PC-3 (cell line): ENCODE measurements at regions of chr1 and their contacts with region 1.

Region 1: DNA sequence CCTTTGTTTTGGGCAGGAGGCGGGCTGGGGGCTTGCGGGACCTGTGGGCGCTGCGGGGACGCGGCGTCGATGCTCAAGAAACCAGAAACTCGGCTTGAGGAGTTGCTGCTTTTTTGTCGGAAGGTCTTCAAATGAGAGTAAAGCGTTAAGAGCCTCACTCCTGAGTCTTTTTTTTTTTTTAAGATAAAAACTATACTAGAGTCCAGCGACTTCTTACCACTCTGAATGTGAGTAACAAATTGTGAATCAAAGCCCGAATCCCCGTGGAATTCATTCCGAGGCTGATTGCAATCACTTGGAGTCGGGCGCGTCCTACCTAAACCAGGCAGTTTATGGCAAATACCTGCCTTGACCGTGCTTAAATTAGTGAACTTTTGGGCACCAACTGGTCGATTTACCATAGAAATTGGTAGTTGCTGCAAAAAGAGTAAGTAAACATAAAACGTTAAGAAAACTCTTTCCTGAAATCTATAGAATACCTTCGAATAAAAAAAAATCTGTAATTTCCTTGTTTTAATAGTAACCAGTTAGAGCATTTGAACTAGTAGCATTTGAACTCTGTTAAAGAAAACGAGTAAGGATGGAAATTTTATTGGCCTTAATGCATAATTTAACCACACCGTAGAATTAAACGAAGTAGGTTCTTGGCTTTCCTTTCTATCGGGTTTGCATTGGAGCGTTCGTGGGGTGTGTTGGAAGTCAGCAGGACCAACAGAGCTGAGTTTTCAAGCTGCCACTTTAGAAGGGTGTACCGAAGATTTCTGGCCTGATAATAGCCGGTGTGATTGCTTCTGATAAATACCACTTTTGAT is 769 bp downstream of the GPSM2 start:
- DNase-seq: peak; percentile 39
- ATAC-seq: peak; percentile 23
- H3K4me3 ChIP-seq: peak overlapping the region; percentile 87
- H3K27ac ChIP-seq: 0 out of 2 replicates have a peak overlapping the region, but pooled peaks have one; percentile 12
- H3K4me1 ChIP-seq: peaks cover 20% of the 10 kb centered on the region
- H3K27me3 ChIP-seq: no peaks in the 10 kb centered on the region
- CTCF ChIP-seq: no peak

Region 2: GRCh38 chr1:108801101-108801500 is 76.5 kb before region 1 on chr1:
- CTCF ChIA-PET with region 1: no interaction called
- POLR2A ChIA-PET with region 1: no interaction called
- intact Hi-C with region 1: no loop called
- DNase-seq: no peak
- ATAC-seq: no peak
- H3K4me3 ChIP-seq: no peak overlapping the region
- H3K27ac ChIP-seq: no peak overlapping the region
- H3K4me1 ChIP-seq: no peaks in the 10 kb centered on the region
- H3K27me3 ChIP-seq: no peaks in the 10 kb centered on the region
- CTCF ChIP-seq: no peak

Region 3: DNA sequence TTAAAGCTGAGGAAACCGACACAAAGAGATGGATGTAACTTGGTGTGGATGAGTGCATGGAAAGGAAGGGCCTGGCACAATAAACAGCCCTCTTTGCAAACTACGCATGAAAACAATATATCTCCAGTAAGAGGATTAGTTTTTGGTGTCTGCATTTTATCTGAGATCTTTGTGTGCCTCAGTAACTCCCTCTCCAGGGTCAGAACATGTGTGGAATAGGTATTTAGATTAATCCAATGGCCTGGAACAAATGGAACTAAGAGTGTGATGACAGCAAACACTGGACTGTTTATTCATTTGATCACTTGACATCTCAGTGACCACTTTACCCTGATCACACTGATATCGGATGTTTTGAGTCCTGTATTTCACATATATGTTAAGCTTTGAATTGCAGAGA is 65.9 kb before region 1 on chr1:
- CTCF ChIA-PET with region 1: no interaction called
- POLR2A ChIA-PET with region 1: no interaction called
- intact Hi-C with region 1: no loop called
- DNase-seq: no peak
- ATAC-seq: no peak
- H3K4me3 ChIP-seq: no peak overlapping the region
- H3K27ac ChIP-seq: no peak overlapping the region
- H3K4me1 ChIP-seq: peaks cover 32% of the 10 kb centered on the region
- H3K27me3 ChIP-seq: no peaks in the 10 kb centered on the region
- CTCF ChIP-seq: no peak

Region 4: GRCh38 chr1:108897865-108898720 is 20.5 kb after region 1 on chr1:
- CTCF ChIA-PET with region 1: interaction called, 7 read pairs
- POLR2A ChIA-PET with region 1: no interaction called
- intact Hi-C with region 1: loop called (anchors 2 kb)
- DNase-seq: peak; percentile 80
- ATAC-seq: peak; percentile 60
- H3K4me3 ChIP-seq: no peak overlapping the region
- H3K27ac ChIP-seq: no peak overlapping the region
- H3K4me1 ChIP-seq: peaks cover 14% of the 10 kb centered on the region
- H3K27me3 ChIP-seq: no peaks in the 10 kb centered on the region
- CTCF ChIP-seq: peak; percentile 84

Region 5: GRCh38 chr1:108947871-108948525 is 70.4 kb after region 1 on chr1:
- CTCF ChIA-PET with region 1: no interaction called
- POLR2A ChIA-PET with region 1: no interaction called
- intact Hi-C with region 1: no loop called
- DNase-seq: no peak
- ATAC-seq: no peak
- H3K4me3 ChIP-seq: no peak overlapping the region
- H3K27ac ChIP-seq: no peak overlapping the region
- H3K4me1 ChIP-seq: no peaks in the 10 kb centered on the region
- H3K27me3 ChIP-seq: no peaks in the 10 kb centered on the region
- CTCF ChIP-seq: no peak